Mammary epithelial cell (primary cell): ENCODE measurements at regions of chr9 and their contacts with region 1.

Region 1: DNA sequence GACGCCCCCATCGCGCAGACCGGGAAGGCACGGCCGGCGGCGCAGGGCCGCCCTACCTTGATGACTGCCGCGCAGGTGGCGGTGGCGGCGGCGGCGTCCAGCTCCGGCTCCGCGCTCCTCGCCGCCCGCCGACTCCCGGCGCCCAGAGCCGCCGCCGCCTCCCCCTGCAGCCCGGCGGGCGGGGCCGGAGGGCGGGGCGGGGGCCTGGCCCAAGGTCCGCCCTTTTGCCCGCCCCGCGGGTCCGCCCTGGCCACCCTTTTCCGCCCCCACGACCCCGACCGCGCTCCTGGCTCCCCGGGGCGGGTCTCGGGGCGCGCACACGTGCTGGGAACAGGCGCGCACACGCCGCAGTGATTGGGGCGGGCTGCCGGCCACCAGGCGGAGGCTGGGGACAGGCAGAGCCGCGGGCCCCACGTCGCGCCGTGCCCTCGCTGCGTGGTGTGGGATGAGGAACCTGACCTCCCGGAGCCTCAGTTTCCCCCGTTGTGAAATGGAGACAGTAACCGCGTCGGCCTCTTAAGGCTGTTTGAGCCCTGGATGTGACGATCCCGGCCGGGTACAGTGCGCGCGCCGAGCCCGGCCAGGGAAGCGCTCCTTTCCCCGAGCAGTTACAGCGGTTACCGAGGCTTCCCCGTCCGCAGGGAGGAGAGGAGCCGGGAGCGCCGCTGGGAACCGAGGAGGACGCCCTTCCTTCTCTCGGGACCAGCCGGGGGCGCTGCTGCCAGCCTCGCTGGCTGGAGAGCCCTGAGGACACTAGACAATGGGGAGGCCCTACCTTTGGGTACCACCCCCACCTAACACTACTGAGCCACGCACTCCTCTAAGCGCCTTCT is at the start of gene CORO2A:
- DNase-seq: peak; percentile 83
- H3K4me3 ChIP-seq: peak within 1 kb of the TSS; percentile 69 to 85 (median 70)
- H3K27ac ChIP-seq: peak within 1 kb of the TSS; percentile 41
- H3K4me1 ChIP-seq: peaks cover 16% of the 10 kb centered on the region
- H3K27me3 ChIP-seq: no peaks in the 10 kb centered on the region
- CTCF ChIP-seq: peak; percentile 15 to 57
- total RNA-seq, gene CORO2A: 9.7 to 19.7 TPM

Region 2: DNA sequence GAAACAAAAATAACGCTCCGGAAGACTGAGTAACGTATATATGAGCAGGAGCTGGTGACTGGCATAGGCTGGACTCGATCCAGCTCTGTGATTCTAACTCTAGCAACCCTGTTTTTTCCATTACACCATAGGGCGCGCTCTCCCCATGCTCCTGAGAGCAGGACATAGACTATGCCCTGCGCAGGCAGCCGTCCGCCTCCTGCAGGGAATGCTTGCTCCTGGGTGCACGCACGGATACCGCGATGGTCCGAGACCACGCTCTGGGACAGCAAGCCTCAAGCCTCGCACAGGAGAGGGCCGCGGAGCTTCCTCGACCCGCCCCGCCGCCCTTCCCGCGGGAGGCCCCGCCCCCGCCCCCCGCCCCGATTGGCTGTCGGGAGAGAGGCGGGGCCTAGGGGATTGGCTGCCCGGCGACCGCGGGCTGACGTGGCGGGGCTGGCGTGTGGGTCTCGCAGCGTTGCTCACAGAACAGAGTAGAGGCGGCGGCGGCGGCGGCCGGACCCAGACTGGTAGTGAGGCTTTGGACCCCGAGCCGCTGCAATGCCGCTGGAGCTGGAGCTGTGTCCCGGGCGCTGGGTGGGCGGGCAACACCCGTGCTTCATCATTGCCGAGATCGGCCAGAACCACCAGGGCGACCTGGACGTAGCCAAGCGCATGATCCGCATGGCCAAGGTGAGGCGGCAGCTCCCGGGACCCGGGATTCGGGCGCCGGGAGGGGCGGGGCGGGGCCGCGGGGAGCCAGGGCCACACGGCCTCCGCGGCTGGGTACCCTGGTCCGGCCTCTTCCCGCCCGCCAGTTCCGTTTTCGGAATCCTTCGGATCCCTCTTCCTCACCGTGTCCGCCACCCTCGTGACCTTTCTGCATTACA is 136.2 kb before region 1 on chr9 and contains the start of gene NANS:
- CTCF ChIA-PET with region 1: no interaction called
- dilution Hi-C with region 1: no loop called
- in situ Hi-C with region 1: no loop called
- intact Hi-C with region 1: loop called (anchors 5 kb)
- DNase-seq: peak; percentile 96
- H3K4me3 ChIP-seq: peak within 1 kb of the TSS; percentile 56 to 95 (median 57)
- H3K27ac ChIP-seq: peak within 1 kb of the TSS; percentile 62
- H3K4me1 ChIP-seq: peaks cover 10% of the 10 kb centered on the region
- H3K27me3 ChIP-seq: no peaks in the 10 kb centered on the region
- CTCF ChIP-seq: no peak
- total RNA-seq, gene NANS: 44.7 to 52.4 TPM

Region 3: DNA sequence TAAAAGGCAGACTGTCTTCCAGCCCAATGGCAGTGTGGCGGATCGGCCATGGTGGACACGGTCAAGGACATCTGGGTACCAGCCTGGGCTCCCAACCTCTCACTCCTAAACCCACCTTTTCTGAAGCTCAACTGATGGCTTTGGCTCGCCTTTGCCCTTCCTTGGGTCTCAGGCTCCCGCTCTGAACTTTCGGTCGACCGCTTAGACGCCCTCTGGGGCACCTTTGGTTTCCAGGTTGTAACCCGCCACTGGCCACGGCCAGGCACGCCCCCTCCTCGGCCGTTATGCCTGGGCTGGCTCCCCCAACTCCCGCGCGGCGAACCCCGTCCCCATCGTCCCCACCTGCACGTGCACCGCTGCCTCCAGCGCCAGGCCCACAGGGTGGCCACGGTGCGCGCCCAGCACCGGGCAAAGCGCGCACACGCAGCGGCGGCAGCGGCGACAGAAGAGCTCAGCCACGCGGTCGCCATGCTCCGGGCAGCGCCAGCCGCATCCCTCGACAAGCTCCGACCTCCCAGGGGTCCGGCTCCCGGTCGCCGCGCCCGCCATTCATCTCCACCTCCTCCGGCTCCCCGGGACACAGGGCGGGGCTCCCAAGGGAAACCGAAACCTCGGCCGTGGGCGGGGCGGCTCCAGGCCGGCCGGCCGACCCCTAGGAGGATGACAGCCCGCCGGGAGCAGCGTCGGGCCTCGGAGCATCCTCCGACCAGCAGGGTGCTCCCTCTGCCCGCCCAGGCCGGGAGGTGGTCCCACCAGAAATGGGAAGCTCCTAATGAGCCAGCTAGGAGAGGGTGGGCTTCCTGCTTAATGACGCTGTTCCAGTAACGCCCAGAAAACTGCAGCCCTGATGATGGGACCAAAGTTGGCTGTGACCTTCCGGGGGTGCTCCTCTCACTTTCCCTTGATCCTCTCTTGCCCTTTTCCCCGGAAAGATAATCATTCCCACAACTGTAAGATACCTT is 73.8 kb before region 1 on chr9 and contains the start of gene TRIM14:
- CTCF ChIA-PET with region 1: no interaction called
- dilution Hi-C with region 1: no loop called
- in situ Hi-C with region 1: no loop called
- intact Hi-C with region 1: loop called (anchors 1 kb)
- DNase-seq: peak; percentile 64
- H3K4me3 ChIP-seq: peak within 1 kb of the TSS; percentile 37 to 68 (median 62)
- H3K27ac ChIP-seq: peak within 1 kb of the TSS; percentile 37
- H3K4me1 ChIP-seq: peaks cover 6% of the 10 kb centered on the region
- H3K27me3 ChIP-seq: no peaks in the 10 kb centered on the region
- CTCF ChIP-seq: peak in 1 of 2 donors; percentile 20
- total RNA-seq, gene TRIM14: 11.3 to 17.6 TPM

Region 4: DNA sequence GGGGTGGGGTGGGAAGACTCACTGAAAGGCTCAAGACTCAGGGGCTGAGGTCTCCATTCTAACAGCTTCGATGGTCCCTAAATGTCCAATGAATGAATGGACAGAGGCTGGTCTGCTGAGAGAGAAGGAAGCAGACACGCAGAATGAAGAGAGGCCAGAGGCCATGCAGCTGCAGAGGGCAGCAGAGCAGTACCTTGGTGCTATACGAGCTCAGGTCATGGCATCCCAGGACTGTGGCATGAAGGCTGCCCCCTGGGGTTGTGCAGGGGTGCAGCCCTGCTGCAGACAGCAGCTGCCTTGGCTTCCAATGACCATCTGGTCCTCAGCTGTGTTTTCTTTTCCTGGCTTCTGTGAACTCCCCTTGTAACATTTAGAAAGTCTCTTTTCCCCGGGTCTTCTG is 14.9 kb after region 1 on chr9:
- CTCF ChIA-PET with region 1: no interaction called
- dilution Hi-C with region 1: no loop called
- in situ Hi-C with region 1: no loop called
- intact Hi-C with region 1: loop called (anchors 1 kb)
- DNase-seq: no peak
- H3K4me3 ChIP-seq: no peak overlapping the region
- H3K27ac ChIP-seq: no peak overlapping the region
- H3K4me1 ChIP-seq: no peaks in the 10 kb centered on the region
- H3K27me3 ChIP-seq: no peaks in the 10 kb centered on the region
- CTCF ChIP-seq: no peak

Region 5: DNA sequence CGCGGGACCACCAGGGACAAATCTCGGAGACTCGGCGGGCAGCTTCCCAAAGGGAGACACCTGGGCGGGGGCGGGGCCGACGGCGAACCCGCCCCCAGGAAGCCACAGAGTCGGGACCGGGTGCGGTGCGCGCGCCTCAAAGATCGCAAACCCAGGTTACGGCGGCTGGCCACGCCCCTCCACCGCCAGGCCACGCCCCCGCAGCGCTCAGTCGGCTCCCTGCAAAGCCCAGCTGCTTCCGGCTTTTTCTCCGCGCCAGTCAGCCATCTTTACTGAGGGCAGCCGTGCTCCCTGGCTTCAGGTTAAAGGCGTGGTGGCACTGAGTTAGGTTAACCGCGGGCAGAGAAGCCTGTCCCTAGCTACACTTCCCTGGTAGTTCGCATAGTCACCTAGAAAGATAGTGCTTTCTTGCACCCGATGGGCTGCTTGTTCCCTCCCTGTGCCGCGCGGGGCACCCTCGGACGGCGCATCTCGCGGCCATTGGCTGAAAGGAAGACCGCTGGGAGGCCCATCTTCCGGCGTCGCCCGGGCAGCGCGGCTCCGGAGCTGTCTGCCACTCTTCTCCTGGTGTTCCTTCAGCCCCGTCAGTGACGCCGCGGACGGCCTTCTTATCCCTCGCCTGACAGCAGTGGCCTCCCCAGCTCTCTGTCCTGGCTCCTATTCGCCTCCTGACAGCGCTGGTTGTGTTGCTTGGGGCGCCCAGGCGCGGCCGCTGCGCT is 63.0 kb after region 1 on chr9 and contains the start of gene TBC1D2:
- CTCF ChIA-PET with region 1: interaction called, 6 read pairs
- dilution Hi-C with region 1: no loop called
- in situ Hi-C with region 1: no loop called
- intact Hi-C with region 1: loop called (anchors 2 kb)
- DNase-seq: peak; percentile 94
- H3K4me3 ChIP-seq: peak within 1 kb of the TSS; percentile 69 to 97 (median 93)
- H3K27ac ChIP-seq: peak within 1 kb of the TSS; percentile 72
- H3K4me1 ChIP-seq: peaks cover 39% of the 10 kb centered on the region
- H3K27me3 ChIP-seq: no peaks in the 10 kb centered on the region
- CTCF ChIP-seq: peak in 1 of 2 donors; percentile 35
- total RNA-seq, gene TBC1D2: 86.7 to 98.2 TPM